Ascending aorta (tissue), 2 donors: ENCODE measurements at regions of chr1 and their contacts with region 1.

Region 1: DNA sequence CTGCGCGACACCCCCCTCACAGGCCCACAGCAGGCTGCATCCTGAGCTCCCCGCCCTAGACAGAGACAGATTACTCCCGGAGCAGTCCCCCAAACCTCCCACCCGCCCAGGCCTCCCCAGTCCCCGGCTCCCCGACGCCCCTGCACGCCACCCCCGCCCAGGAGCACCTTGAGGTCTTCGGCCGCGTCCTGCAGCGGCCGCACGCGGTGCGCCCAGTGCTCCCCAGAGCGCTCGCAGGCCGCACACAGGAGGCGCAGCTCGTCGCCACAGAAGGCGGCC is 709 bp downstream of the TRIM11 start:
- DNase-seq: no peak
- H3K4me3 ChIP-seq: peak overlapping the region; percentile 89 to 95
- H3K27ac ChIP-seq: peak overlapping the region; percentile 76 to 78
- H3K4me1 ChIP-seq: peaks cover 17 to 28% of the 10 kb centered on the region in 2 donors
- H3K27me3 ChIP-seq: no peaks in the 10 kb centered on the region
- CTCF ChIP-seq: no peak

Region 2: GRCh38 chr1:228082135-228082891 is 323.6 kb before region 1 on chr1 and contains the start of gene ARF1:
- intact Hi-C with region 1: loop called (anchors 1 kb)
- DNase-seq: peak; percentile 70 to 93
- H3K4me3 ChIP-seq: peak within 1 kb of the TSS; percentile 97 to 100
- H3K27ac ChIP-seq: peak within 1 kb of the TSS; percentile 99 to 100
- H3K4me1 ChIP-seq: peaks cover 29 to 35% of the 10 kb centered on the region in 2 donors
- H3K27me3 ChIP-seq: no peaks in the 10 kb centered on the region
- CTCF ChIP-seq: no peak
- total RNA-seq, gene ARF1: 447 TPM

Region 3: DNA sequence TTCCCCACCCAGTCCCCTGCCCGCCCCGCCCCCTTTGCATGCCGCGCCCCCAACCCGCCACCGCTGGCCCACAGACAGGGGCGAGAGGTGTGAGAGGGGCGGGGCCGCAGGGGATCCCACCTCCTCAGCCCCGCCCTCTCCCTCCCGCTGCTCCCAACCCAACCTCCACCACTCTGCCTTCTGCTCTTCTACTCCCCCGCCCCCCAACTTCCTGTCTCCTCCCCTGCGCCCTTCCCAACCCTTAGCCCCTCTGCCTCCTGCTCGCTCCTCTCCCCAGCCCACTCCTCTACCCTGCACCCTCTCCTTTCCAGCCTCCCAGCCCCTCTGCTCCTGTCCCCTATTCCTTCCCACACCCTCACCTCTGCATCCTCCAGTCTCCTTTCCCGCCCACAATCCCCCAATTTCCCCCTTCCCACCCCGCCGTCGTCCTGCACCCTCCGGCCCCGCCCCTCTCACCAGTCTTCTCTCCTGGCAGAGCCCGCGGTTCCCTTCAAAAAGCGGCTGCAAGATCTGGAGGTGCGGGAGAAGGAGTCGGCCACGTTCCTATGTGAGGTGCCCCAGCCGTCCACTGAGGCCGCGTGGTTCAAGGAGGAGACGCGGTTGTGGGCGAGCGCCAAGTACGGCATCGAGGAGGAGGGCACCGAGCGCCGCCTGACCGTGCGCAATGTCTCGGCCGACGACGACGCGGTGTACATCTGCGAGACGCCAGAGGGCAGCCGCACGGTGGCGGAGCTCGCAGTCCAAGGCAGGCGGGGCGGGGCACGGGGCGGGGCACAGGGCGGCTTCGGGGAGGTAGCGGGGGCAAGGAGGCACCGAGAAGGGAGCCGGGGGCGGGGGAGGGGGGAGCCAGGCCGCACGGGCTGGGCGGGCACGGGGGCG is 192.7 kb before region 1 on chr1:
- intact Hi-C with region 1: loop called (anchors 10 kb)
- DNase-seq: peak; percentile 38 to 91
- H3K4me3 ChIP-seq: peak overlapping the region; percentile 48 to 73
- H3K27ac ChIP-seq: peak overlapping the region in 1 of 2 donors; percentile 32
- H3K4me1 ChIP-seq: peaks cover 8 to 14% of the 10 kb centered on the region in 2 donors
- H3K27me3 ChIP-seq: no peaks in the 10 kb centered on the region
- CTCF ChIP-seq: peak; percentile 33 to 70 (median 50)

Region 4: DNA sequence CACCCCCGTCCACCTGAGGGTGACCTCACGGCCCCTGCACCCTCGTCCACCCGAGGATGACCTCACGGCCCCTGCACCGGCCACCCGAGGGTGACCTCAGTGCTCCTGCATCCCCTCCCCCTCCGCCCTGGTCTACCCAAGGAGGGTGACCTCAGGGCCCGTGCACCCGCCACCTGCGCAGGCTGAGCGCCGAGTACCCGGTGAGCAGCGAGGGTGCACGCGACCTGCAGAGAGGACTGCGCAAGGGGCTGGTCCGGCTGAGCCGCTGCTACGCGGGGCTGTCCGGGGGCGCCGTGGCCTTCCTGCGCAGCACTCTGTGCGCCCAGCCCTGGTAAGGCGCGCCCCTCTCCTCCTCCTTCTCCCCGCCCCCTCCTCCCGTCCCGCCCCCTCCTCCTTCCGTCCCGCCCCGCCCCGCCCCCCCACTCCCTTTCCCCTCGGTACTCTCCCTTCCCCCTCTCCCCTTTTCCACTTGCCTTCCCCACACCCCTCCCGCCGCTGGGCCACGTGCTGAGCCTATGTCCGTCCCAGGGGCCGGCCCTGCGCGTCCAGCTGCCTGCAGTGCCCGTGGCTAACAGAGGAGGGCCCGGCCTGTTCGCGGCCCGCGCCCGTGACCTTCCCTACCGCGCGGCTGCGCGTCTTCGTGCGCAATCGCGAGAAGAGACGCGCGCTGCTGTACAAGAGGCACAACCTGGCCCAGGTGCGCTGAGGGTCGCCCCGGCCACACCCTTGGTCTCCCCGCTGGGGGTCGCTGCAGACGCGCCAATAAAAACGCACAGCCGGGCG is 27.6 kb before region 1 on chr1:
- intact Hi-C with region 1: loop called (anchors 2 kb)
- DNase-seq: peak; percentile 7 to 80
- H3K4me3 ChIP-seq: peak overlapping the region; percentile 63 to 79
- H3K27ac ChIP-seq: peak overlapping the region in 1 of 2 donors; percentile 55
- H3K4me1 ChIP-seq: peaks cover 0 to 6% of the 10 kb centered on the region in 2 donors
- H3K27me3 ChIP-seq: no peaks in the 10 kb centered on the region
- CTCF ChIP-seq: peak; percentile 45 to 52 (median 49)

Region 5: GRCh38 chr1:228475812-228476211 is 69.9 kb after region 1 on chr1:
- intact Hi-C with region 1: no loop called
- DNase-seq: no peak
- H3K4me3 ChIP-seq: no peak overlapping the region
- H3K27ac ChIP-seq: no peak overlapping the region
- H3K4me1 ChIP-seq: no peaks in the 10 kb centered on the region
- H3K27me3 ChIP-seq: no peaks in the 10 kb centered on the region
- CTCF ChIP-seq: no peak

Region 6: GRCh38 chr1:228486596-228487335 is 80.8 kb after region 1 on chr1:
- intact Hi-C with region 1: loop called (anchors 2 kb)
- DNase-seq: peak; percentile 14 to 82
- H3K4me3 ChIP-seq: peak overlapping the region; percentile 76 to 97
- H3K27ac ChIP-seq: peak overlapping the region; percentile 99 to 100
- H3K4me1 ChIP-seq: peaks cover 17 to 28% of the 10 kb centered on the region in 2 donors
- H3K27me3 ChIP-seq: no peaks in the 10 kb centered on the region
- CTCF ChIP-seq: no peak

Region 7: DNA sequence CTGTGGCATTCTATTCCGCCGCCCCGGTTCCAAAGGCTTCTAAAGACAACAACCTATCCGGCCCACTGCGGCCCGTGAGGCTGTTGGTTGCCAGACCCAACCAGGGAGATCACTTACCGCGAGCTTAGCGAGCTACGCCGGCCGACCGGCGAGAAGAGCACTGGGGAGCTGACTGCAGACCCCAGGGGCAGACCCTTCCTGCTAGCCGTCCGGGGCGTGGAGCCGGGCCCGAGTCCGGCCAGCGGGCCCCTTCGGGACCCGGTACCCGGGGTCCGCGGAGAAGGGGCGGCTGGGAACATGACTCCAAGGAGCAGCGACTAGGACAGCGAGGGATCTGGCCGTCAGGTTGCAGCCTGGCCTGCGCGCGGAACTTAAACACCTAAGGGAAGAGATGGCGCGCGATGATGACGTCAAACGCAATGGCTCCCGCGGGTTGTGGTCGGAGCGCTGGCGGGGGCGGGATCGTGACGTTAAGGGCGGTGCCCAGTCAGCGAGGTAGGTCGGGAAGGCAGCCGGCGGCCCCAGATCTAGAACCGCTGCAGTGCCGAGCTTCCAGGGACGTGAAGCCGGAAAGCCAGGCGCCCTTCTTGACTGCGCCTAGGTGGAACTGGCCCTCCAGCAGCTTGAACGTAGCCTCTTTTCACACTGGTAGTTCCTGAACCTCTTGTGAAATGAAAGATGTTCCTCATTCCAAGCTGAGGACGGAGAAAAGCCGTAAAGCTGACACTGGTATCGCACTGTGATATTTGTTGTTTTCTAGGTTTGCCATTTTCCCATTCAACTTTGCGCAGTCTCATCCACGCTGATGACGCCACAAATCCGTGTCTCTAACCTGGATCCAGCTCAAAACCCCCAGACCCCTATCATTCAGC is 1102.3 kb after region 1 on chr1 and contains the start of gene NUP133:
- intact Hi-C with region 1: loop called (anchors 5 kb)
- DNase-seq: peak; percentile 92 to 99
- H3K4me3 ChIP-seq: peak within 1 kb of the TSS; percentile 96 to 100
- H3K27ac ChIP-seq: peak within 1 kb of the TSS; percentile 89 to 98
- H3K4me1 ChIP-seq: peaks cover 7 to 11% of the 10 kb centered on the region in 2 donors
- H3K27me3 ChIP-seq: no peaks in the 10 kb centered on the region
- CTCF ChIP-seq: no peak
- total RNA-seq, gene NUP133: 9.3 TPM